ENCODE measurements at regions of chr11 and their contacts with region 1.

Region 1: DNA sequence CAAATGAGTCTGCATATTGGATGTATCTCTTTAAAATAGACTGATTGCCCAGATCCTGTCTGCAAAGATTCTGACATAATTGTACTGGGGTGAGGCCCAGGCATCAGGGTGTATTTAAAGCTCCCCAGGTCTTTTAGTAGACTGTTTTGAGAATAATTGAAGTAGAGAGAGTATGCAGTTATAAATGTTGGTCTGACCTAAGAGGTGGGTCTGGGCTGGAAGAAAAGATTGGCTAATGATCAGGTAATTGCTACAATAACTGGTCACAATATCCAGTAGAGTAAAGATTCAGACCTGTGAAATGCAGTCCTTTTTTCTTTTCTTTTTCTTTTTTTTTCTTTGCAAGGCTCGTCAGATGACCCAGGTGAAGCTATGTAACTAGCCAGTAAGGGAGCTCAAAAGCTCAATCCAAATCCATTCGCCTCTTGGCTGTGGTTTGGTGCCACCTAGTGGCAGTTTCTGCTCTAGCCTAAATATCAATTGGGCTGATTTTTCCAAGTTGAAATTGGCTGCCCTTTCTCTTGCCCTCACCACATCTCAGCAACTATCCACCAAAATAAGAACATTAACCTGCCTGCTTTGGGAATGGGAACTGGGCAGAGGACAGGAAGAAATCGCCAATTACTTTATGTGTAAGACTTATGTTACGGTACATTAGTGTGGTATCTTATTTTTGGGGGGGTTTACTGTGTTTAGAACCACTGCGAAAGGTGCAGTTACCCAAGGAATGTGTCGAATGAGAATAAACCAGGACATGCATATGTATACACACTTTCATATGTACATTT is 45.9 kb downstream of the ZNF143 start:
- DNase-seq: peak; percentile 39
- ATAC-seq: peak; percentile 80
- H3K4me3 ChIP-seq: no peak overlapping the region
- H3K27ac ChIP-seq: no peak overlapping the region
- H3K4me1 ChIP-seq: peaks cover 4% of the 10 kb centered on the region
- H3K27me3 ChIP-seq: no peaks in the 10 kb centered on the region
- CTCF ChIP-seq: peak; percentile 78 to 93 (median 92)
- EP300 ChIP-seq: no peak
- POLR2A ChIP-seq: no peak
- RAD21 ChIP-seq: peak; percentile 97

Region 2: GRCh38 chr11:8964324-8965320 is 542.1 kb before region 1 on chr11 and contains the start of gene TMEM9B:
- CTCF ChIA-PET with region 1: interaction called, 11 read pairs
- POLR2A ChIA-PET with region 1: no interaction called
- RAD21 ChIA-PET with region 1: interaction called, 12 read pairs
- SMC1A ChIA-PET with region 1: interaction called, 4 read pairs
- in situ Hi-C with region 1: no loop called
- intact Hi-C with region 1: no loop called
- DNase-seq: peak; percentile 62
- ATAC-seq: peak; percentile 89
- H3K4me3 ChIP-seq: peak within 1 kb of the TSS; percentile 83
- H3K27ac ChIP-seq: peak within 1 kb of the TSS; percentile 92
- H3K4me1 ChIP-seq: peaks cover 5% of the 10 kb centered on the region
- H3K27me3 ChIP-seq: no peaks in the 10 kb centered on the region
- CTCF ChIP-seq: no peak
- EP300 ChIP-seq: no peak; a peak in 1 of 4 replicates
- POLR2A ChIP-seq: peak; percentile 87
- RAD21 ChIP-seq: no peak
- polyA plus RNA-seq, gene TMEM9B: 11.5 to 16.6 TPM

Region 3: GRCh38 chr11:9158898-9159391 is 347.7 kb before region 1 on chr11:
- CTCF ChIA-PET with region 1: interaction called, 73 read pairs
- POLR2A ChIA-PET with region 1: no interaction called
- RAD21 ChIA-PET with region 1: interaction called, 9 read pairs
- SMC1A ChIA-PET with region 1: interaction called, 38 read pairs
- in situ Hi-C with region 1: no loop called
- intact Hi-C with region 1: no loop called
- DNase-seq: no peak
- ATAC-seq: no peak
- H3K4me3 ChIP-seq: no peak overlapping the region
- H3K27ac ChIP-seq: no peak overlapping the region
- H3K4me1 ChIP-seq: no peaks in the 10 kb centered on the region
- H3K27me3 ChIP-seq: no peaks in the 10 kb centered on the region
- CTCF ChIP-seq: no peak
- EP300 ChIP-seq: no peak
- POLR2A ChIP-seq: no peak
- RAD21 ChIP-seq: no peak

Region 4: GRCh38 chr11:9265211-9266131 is 241.2 kb before region 1 on chr11 and contains the start of gene DENND5A:
- CTCF ChIA-PET with region 1: interaction called, 4 read pairs
- POLR2A ChIA-PET with region 1: no interaction called
- RAD21 ChIA-PET with region 1: interaction called, 4 read pairs
- SMC1A ChIA-PET with region 1: interaction called, 4 read pairs
- in situ Hi-C with region 1: no loop called
- intact Hi-C with region 1: loop called (anchors 5 kb)
- DNase-seq: no peak
- ATAC-seq: peak; percentile 63
- H3K4me3 ChIP-seq: peak within 1 kb of the TSS; percentile 83
- H3K27ac ChIP-seq: peak within 1 kb of the TSS; percentile 56
- H3K4me1 ChIP-seq: peaks cover 4% of the 10 kb centered on the region
- H3K27me3 ChIP-seq: 0 out of 4 replicates have a peak, but pooled peaks cover 0 to 4% of the 10 kb centered on the region in 2 experiments
- CTCF ChIP-seq: no peak; a peak in 1 of 6 replicates
- EP300 ChIP-seq: no peak
- POLR2A ChIP-seq: peak; percentile 81
- RAD21 ChIP-seq: peak; percentile 23; the same call in 1 of the 2 replicates
- polyA plus RNA-seq, gene DENND5A: 15.6 to 24.1 TPM

Region 5: DNA sequence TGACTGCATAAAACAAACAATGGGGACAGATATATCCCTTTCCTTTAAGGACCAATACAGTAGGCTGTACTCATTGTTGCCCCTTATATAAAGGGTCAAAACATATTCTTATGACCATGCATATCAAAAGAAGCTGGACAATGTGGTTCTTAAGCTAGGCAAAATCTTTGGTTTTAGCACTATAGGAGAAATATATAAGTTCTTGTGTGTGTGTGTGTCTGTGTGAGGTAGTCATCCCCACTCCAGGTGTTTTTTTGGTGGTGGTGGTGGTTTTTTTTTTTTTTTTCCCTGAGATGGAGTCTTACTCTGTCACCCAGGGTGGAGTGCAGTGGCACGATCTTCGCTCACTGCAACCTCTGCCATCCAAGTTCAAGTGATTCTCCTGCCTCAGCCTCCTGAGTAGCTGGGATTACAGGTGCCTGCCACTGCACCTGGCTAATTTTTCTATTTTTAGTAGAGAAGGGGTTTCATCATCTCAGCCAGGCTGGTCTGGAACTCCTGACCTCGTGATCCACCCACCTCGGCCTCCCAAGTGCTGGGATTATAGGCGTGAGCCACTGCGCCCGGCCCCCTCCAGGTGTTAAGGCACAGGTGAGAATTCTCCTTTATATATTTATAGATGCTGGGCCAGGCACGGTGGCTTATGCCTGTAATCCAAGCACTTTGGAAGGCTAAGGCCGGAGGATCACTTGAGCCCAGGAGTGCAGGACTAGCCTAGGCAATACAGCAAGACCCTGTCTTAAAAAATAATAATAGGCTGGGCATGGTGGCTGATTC is 57.9 kb before region 1 on chr11:
- CTCF ChIA-PET with region 1: interaction called, 11 read pairs
- POLR2A ChIA-PET with region 1: no interaction called
- RAD21 ChIA-PET with region 1: interaction called, 3 read pairs
- SMC1A ChIA-PET with region 1: interaction called, 3 read pairs
- in situ Hi-C with region 1: no loop called
- intact Hi-C with region 1: loop called (anchors 5 kb)
- DNase-seq: no peak
- ATAC-seq: no peak; the same call in 2 of the 3 replicates
- H3K4me3 ChIP-seq: no peak overlapping the region
- H3K27ac ChIP-seq: no peak overlapping the region
- H3K4me1 ChIP-seq: no peaks in the 10 kb centered on the region
- H3K27me3 ChIP-seq: no peaks in the 10 kb centered on the region
- CTCF ChIP-seq: no peak
- EP300 ChIP-seq: no peak
- POLR2A ChIP-seq: no peak
- RAD21 ChIP-seq: no peak

Region 6: GRCh38 chr11:9534791-9535781 is 28.4 kb after region 1 on chr11:
- CTCF ChIA-PET with region 1: interaction called, 19 read pairs
- POLR2A ChIA-PET with region 1: interaction called, 4 read pairs
- RAD21 ChIA-PET with region 1: interaction called, 5 read pairs
- SMC1A ChIA-PET with region 1: interaction called, 12 read pairs
- in situ Hi-C with region 1: no loop called
- intact Hi-C with region 1: no loop called
- DNase-seq: peak; percentile 25
- ATAC-seq: peak; percentile 87
- H3K4me3 ChIP-seq: no peak overlapping the region
- H3K27ac ChIP-seq: no peak overlapping the region
- H3K4me1 ChIP-seq: no peaks in the 10 kb centered on the region
- H3K27me3 ChIP-seq: no peaks in the 10 kb centered on the region
- CTCF ChIP-seq: peak; percentile 79 to 92 (median 86)
- EP300 ChIP-seq: no peak
- POLR2A ChIP-seq: no peak
- RAD21 ChIP-seq: peak; percentile 79

Region 7: GRCh38 chr11:9748361-9748970 is 241.8 kb after region 1 on chr11:
- CTCF ChIA-PET with region 1: interaction called, 40 read pairs
- POLR2A ChIA-PET with region 1: no interaction called
- RAD21 ChIA-PET with region 1: interaction called, 6 read pairs
- SMC1A ChIA-PET with region 1: interaction called, 27 read pairs
- in situ Hi-C with region 1: no loop called
- intact Hi-C with region 1: loop called (anchors 5 kb)
- DNase-seq: peak; percentile 72
- ATAC-seq: peak; percentile 90
- H3K4me3 ChIP-seq: no peak overlapping the region
- H3K27ac ChIP-seq: no peak overlapping the region
- H3K4me1 ChIP-seq: peaks cover 42% of the 10 kb centered on the region
- H3K27me3 ChIP-seq: no peaks in the 10 kb centered on the region
- CTCF ChIP-seq: peak; percentile 83 to 92 (median 91)
- EP300 ChIP-seq: no peak; a peak in 1 of 4 replicates
- POLR2A ChIP-seq: no peak
- RAD21 ChIP-seq: peak; percentile 97

Region 8: GRCh38 chr11:9922806-9923205 is 416.1 kb after region 1 on chr11:
- CTCF ChIA-PET with region 1: no interaction called
- POLR2A ChIA-PET with region 1: no interaction called
- RAD21 ChIA-PET with region 1: no interaction called
- SMC1A ChIA-PET with region 1: no interaction called
- in situ Hi-C with region 1: no loop called
- intact Hi-C with region 1: no loop called
- DNase-seq: no peak
- ATAC-seq: no peak
- H3K4me3 ChIP-seq: no peak overlapping the region
- H3K27ac ChIP-seq: no peak overlapping the region
- H3K4me1 ChIP-seq: no peaks in the 10 kb centered on the region
- H3K27me3 ChIP-seq: 0 out of 4 replicates have a peak, but pooled peaks cover 0 to 1% of the 10 kb centered on the region in 2 experiments
- CTCF ChIP-seq: no peak
- EP300 ChIP-seq: no peak
- POLR2A ChIP-seq: no peak
- RAD21 ChIP-seq: no peak

Region 9: DNA sequence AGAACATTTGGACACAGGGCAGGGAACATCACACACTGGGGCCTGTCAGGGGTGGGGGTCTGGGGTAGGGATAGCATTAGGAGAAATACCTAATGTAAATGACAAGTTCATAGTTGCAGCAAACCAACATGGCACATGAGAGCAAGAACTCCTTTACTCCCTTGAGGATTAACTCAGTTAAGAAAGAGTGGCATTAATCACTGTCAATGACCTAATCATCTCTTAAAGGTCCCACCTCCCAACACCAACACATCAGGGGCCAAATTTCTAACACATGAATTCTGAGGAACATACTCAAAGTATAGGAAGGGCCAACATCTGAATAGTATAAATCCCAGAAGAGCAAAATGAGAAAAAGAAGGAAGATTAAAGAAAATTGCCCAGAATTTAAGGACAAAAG is 430.1 kb after region 1 on chr11:
- CTCF ChIA-PET with region 1: no interaction called
- POLR2A ChIA-PET with region 1: no interaction called
- RAD21 ChIA-PET with region 1: no interaction called
- SMC1A ChIA-PET with region 1: no interaction called
- in situ Hi-C with region 1: no loop called
- intact Hi-C with region 1: no loop called
- DNase-seq: no peak
- ATAC-seq: no peak
- H3K4me3 ChIP-seq: no peak overlapping the region
- H3K27ac ChIP-seq: no peak overlapping the region
- H3K4me1 ChIP-seq: no peaks in the 10 kb centered on the region
- H3K27me3 ChIP-seq: no peaks in the 10 kb centered on the region
- CTCF ChIP-seq: no peak
- EP300 ChIP-seq: no peak
- POLR2A ChIP-seq: no peak
- RAD21 ChIP-seq: no peak

Region 10: GRCh38 chr11:9992306-9992705 is 485.6 kb after region 1 on chr11:
- CTCF ChIA-PET with region 1: no interaction called
- POLR2A ChIA-PET with region 1: no interaction called
- RAD21 ChIA-PET with region 1: no interaction called
- SMC1A ChIA-PET with region 1: no interaction called
- in situ Hi-C with region 1: no loop called
- intact Hi-C with region 1: no loop called
- DNase-seq: no peak
- ATAC-seq: no peak
- H3K4me3 ChIP-seq: no peak overlapping the region
- H3K27ac ChIP-seq: no peak overlapping the region
- H3K4me1 ChIP-seq: no peaks in the 10 kb centered on the region
- H3K27me3 ChIP-seq: no peaks in the 10 kb centered on the region
- CTCF ChIP-seq: no peak
- EP300 ChIP-seq: no peak
- POLR2A ChIP-seq: no peak
- RAD21 ChIP-seq: no peak

Measured in GM12878 (cell line).